ENCODE measurements at regions of chr17 and their contacts with region 1.

Region 1: DNA sequence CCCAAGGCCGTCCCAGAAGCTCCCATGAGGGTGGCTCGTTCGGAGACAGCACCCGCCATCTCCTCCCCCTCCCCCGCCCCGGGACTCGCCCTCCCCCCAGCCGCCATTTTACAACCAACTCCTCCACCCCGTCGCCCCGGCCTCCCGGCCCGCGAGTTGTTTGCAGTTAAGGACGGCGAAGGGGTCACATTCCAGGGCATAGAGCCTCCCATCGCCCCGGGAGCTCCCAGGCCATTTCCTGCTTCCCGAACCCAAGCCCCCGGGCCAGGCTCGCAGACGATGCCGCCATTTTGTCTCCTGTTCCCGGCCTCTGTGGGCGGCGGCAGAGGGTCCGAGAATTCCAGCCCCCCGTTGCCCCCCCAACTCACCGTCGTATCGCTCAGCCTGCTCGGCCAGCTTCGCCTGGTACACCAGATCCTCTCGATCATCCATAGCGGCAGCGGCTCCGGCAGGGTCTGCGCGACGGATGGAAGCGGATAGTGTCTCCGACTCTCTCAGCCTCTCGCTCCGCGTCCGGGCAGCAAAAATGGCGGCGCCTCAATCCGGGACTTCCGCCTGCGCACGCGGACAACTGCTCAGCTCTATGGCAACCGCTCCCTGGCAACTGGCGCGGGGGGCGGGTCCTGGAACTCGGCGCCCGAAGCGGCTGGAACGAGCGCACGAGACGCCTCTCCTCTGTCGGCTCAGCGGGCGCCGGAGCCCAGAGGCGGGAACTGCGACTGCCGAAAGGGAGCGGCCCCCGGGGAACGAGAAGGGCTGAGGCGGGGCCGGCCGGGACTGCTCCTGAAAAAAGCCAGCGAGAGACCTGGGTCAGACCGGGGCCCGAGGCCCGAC is at the start of gene YWHAE:
- DNase-seq: peak; percentile 98
- ATAC-seq: peak; percentile 93
- H3K4me3 Mint-ChIP-seq: peak within 1 kb of the TSS; percentile 100
- H3K27ac Mint-ChIP-seq: peak within 1 kb of the TSS; percentile 100
- H3K4me1 Mint-ChIP-seq: peaks cover 28% of the 10 kb centered on the region
- H3K27me3 Mint-ChIP-seq: no peaks in the 10 kb centered on the region
- CTCF ChIP-seq: no peak
- total RNA-seq, gene YWHAE: 425 to 440 TPM

Region 2: DNA sequence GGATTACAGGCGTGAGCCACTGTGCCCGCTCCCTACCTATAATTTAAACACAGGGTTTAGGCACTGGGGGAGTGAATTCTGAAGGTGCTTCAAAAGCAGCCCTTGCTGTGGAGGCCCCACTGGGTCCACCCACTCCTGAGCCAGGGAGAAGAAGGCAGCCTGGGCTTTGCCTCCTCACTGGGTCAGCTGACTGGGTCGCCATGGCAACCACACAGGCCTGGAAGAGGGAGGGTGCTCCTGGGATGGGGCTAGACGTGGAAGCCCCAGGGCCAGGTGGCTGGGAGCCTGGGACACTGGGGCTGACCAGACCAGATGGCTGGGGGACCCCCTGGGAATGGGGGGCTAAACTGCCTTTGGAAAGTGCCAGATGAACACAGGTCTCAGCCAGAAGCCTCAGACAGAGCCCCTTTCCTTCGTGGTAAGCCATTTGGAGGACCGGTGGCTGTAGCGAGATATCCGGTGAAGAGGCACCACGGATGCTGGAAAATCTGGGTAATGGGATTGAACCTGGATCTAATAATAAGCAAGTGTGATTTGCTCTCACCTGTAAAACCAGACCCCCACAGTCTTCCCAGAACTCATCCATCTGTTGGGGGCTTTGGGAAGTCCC is 87.5 kb before region 1 on chr17:
- CTCF ChIA-PET with region 1: no interaction called
- POLR2A ChIA-PET with region 1: no interaction called
- intact Hi-C with region 1: no loop called
- DNase-seq: no peak
- ATAC-seq: peak; percentile 53
- H3K4me3 Mint-ChIP-seq: no peak overlapping the region
- H3K27ac Mint-ChIP-seq: no peak overlapping the region
- H3K4me1 Mint-ChIP-seq: no peaks in the 10 kb centered on the region
- H3K27me3 Mint-ChIP-seq: peaks cover 12% of the 10 kb centered on the region
- CTCF ChIP-seq: no peak

Region 3: GRCh38 chr17:1374431-1375177 is 25.3 kb before region 1 on chr17:
- CTCF ChIA-PET with region 1: interaction called, 5 read pairs
- POLR2A ChIA-PET with region 1: interaction called, 20 read pairs
- intact Hi-C with region 1: no loop called
- DNase-seq: no peak
- ATAC-seq: peak; percentile 60
- H3K4me3 Mint-ChIP-seq: peak overlapping the region; percentile 7
- H3K27ac Mint-ChIP-seq: peak overlapping the region; percentile 83
- H3K4me1 Mint-ChIP-seq: peaks cover 73% of the 10 kb centered on the region
- H3K27me3 Mint-ChIP-seq: no peaks in the 10 kb centered on the region
- CTCF ChIP-seq: no peak

Region 4: DNA sequence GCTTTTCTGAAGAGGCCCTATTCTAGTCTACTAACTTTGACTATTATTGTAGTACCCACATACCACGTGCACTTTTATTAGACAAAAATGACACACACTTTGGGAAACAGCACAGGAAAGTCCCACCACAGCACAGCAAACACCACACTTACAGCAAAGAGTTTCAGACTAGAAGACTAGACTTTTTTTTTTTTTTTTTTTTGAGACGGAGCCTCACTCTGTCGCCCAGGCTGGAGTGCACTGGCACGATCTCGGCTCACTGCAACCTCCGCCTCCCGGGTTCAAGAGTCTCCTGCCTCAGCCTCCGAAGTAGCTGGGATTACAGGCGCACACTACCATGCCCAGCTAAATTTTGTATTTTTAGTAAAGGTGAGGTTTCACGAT is 20.0 kb before region 1 on chr17:
- CTCF ChIA-PET with region 1: interaction called, 3 read pairs
- POLR2A ChIA-PET with region 1: interaction called, 20 read pairs
- intact Hi-C with region 1: no loop called
- DNase-seq: peak; percentile 60
- ATAC-seq: peak; percentile 74
- H3K4me3 Mint-ChIP-seq: peak overlapping the region; percentile 1
- H3K27ac Mint-ChIP-seq: peak overlapping the region; percentile 67
- H3K4me1 Mint-ChIP-seq: peaks cover 69% of the 10 kb centered on the region
- H3K27me3 Mint-ChIP-seq: no peaks in the 10 kb centered on the region
- CTCF ChIP-seq: no peak

Region 5: DNA sequence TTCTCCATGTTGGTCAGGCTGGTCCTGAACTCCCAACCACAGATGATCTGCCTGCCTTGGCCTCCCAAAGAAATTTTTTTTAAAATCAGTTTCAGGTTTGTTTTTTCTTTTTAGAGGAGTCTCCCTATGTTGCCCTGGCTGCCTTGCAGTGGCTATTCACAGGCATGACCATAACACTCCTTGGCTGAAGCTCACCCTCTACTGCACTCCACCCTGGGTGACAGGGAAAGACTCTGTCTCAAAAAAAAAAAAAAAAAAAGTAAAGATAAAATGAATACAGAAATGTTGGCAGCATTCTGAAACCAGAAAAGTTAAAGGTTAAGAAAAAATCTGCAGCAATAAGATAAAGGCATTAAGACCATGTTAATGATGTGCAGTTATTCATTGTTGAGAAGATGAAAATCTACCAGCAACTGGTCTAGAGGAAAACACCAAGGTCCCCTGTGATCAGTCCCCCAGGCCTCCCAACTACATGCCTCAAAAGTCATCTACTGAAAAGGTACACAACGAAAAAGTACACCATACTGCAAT is 14.9 kb before region 1 on chr17:
- CTCF ChIA-PET with region 1: interaction called, 3 read pairs
- POLR2A ChIA-PET with region 1: interaction called, 20 read pairs
- intact Hi-C with region 1: no loop called
- DNase-seq: no peak
- ATAC-seq: no peak
- H3K4me3 Mint-ChIP-seq: no peak overlapping the region
- H3K27ac Mint-ChIP-seq: peak overlapping the region; percentile 30
- H3K4me1 Mint-ChIP-seq: peaks cover 51% of the 10 kb centered on the region
- H3K27me3 Mint-ChIP-seq: no peaks in the 10 kb centered on the region
- CTCF ChIP-seq: no peak

Region 6: DNA sequence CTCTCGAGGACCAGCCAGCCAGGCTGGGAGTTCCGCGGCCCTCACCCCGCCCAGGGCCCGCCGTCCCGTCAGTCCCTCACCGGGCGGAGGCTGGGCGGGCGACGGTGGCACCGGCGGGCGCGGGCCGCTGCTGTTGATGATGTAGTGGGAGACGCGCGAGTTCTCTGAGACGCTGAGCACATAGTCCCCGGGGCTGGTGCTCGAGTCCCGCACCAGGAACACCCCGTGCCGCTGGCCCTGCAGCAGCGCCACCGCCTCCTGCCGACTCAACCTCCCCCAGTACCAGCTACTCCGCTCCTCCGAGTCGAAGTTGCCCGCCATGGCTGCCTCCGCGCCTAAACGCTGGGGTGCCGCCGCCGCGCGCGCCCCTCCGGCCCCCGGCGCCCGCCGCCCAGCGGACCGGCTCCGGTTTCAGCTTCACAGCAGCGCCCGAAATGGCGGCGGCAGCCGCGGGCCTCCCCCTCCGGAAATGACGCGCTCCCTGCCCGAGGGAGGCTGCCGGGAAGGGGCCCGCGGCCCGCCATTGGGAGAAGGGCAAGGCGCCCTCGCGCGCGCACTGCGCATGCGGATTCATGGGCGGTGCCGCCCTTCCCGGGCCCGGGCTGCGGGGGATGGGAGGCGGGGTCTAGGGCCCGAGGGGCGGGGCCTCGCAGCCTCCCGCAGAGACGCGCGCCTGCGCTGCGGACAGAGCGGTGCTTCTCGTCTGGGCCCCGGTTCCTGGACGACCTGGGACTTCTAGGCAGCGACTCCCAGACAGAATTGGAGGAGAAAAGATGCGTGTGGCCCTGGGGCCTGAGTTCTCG is 56.1 kb after region 1 on chr17 and contains the start of gene CRK:
- CTCF ChIA-PET with region 1: no interaction called
- POLR2A ChIA-PET with region 1: interaction called, 11 read pairs
- intact Hi-C with region 1: no loop called
- DNase-seq: peak; percentile 96
- ATAC-seq: peak; percentile 97
- H3K4me3 Mint-ChIP-seq: peak within 1 kb of the TSS; percentile 88
- H3K27ac Mint-ChIP-seq: peak within 1 kb of the TSS; percentile 89
- H3K4me1 Mint-ChIP-seq: peaks cover 33% of the 10 kb centered on the region
- H3K27me3 Mint-ChIP-seq: peaks cover 12% of the 10 kb centered on the region
- CTCF ChIP-seq: no peak
- total RNA-seq, gene CRK: 12.1 to 12.9 TPM